ENCODE measurements at regions of chr1 and their contacts with region 1.

Region 1: DNA sequence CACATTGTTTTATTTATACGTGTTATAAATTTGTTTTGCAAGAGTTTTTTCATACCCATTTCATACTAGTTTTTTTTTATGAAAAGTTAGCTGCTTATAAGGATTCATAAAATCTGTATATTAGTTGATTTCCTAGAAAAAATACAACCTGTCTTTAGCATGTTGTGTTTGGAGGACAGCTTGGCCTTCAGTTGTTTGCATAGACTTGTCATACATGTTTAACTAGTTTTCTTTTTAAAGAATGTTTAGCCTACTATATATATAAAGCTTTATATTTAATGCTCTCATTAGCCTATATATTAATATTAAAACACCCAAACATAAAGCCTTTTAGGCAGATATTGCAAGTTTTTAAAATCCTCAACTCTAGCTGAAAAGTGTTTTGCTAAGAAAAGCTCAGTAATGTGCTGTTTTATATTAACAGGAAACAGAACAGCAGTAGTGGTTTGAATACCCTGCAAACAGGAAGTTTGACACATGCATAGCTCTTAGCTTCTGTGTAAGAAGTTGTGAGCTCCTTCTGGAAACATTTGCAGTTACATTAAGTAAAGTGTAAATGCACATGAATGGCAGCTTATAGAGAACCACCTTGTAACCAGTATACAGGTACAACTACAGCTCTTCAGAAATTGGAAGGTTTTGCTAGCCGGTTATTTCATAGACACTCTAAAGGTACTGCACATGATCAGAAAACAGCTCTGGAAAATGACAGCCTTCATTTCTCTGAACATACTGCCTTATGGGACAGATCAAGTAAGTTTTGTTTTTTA is at the start of gene PRKACB:
- DNase-seq: no peak
- ATAC-seq: peak; percentile 35; the same call in 1 of the 2 replicates
- H3K4me3 ChIP-seq: peak within 1 kb of the TSS; percentile 4 to 16; a peak in 2 of 4 replicates
- H3K27ac ChIP-seq: peak within 1 kb of the TSS; percentile 89
- H3K4me1 ChIP-seq: peaks cover 75 to 82% of the 10 kb centered on the region in 2 experiments
- H3K27me3 ChIP-seq: no peaks in the 10 kb centered on the region
- CTCF ChIP-seq: no peak
- POLR2A ChIP-seq: no peak
- RAD21 ChIP-seq: peak; percentile 27; the same call in 1 of the 2 replicates
- total RNA-seq, gene PRKACB: 135 TPM

Region 2: DNA sequence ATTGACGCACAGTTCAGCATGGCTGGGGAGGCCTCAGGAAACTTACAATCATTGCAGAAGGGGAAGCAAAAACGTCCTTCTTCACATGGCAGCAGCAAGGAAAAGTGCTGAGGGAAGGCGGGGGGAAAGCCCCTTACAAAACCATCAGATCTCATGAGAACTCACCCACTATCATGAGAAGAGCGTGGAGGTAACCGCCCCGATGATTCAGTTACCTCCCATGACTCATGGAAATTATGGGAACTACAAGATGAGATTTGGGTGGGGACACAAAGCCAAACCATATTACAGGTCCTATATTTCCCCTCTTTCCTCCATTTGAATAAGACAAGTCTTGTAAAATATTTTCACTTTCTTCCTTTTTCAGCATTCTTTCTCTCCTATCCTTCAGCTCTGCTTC is 137.4 kb before region 1 on chr1:
- CTCF ChIA-PET with region 1: no interaction called
- POLR2A ChIA-PET with region 1: no interaction called
- RAD21 ChIA-PET with region 1: no interaction called
- intact Hi-C with region 1: no loop called
- DNase-seq: no peak
- ATAC-seq: no peak
- H3K4me3 ChIP-seq: no peak overlapping the region
- H3K27ac ChIP-seq: no peak overlapping the region
- H3K4me1 ChIP-seq: no peaks in the 10 kb centered on the region
- H3K27me3 ChIP-seq: no peaks in the 10 kb centered on the region
- CTCF ChIP-seq: no peak
- POLR2A ChIP-seq: no peak
- RAD21 ChIP-seq: no peak

Region 3: DNA sequence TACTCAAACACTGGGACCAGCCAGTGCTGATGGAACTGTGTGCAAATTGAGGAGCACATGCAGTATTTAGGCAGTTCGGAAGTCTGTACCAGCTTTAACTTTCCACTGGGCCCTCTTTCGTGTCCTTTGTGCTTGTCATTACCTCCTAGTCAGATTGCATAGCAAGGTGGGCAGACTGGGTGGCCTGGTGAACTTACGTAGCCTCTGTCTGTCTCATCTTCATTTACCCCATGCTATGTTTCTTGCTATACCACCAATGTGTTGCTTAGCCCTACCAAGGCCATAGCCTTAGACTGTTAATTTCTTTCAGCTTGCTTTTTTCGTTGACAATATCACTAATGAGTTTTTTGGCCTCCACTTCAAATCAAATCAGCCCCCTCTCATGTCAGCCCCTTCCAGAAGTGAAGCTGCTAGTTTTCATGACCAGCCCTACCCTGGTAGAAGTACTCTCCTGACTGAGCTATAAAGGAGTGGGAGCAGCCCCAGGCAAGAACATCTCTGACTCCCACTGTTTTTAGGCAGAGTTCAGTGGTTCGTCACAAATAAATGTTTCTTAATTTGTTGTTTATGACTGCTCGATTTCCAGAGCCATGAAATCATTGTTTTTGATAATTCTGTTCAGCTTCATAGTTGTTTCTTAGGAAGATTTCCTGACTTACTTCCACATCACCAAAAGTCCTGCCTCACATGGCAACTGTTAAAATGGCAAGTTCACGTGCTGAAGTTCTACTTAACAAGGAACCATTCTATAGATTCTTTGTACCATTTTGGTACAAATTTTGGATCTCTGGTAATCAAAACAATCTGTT is 19.3 kb after region 1 on chr1:
- CTCF ChIA-PET with region 1: interaction called, 3 read pairs
- POLR2A ChIA-PET with region 1: interaction called, 19 read pairs
- RAD21 ChIA-PET with region 1: no interaction called
- intact Hi-C with region 1: no loop called
- DNase-seq: no peak
- ATAC-seq: peak; percentile 40
- H3K4me3 ChIP-seq: no peak overlapping the region
- H3K27ac ChIP-seq: peak overlapping the region; percentile 99
- H3K4me1 ChIP-seq: peaks cover 82 to 96% of the 10 kb centered on the region in 2 experiments
- H3K27me3 ChIP-seq: no peaks in the 10 kb centered on the region
- CTCF ChIP-seq: no peak
- POLR2A ChIP-seq: no peak
- RAD21 ChIP-seq: no peak

Region 4: GRCh38 chr1:84433258-84434080 is 289.5 kb after region 1 on chr1:
- CTCF ChIA-PET with region 1: interaction called, 29 read pairs
- POLR2A ChIA-PET with region 1: interaction called, 4 read pairs
- RAD21 ChIA-PET with region 1: interaction called in 1 of 2 experiments, 7 read pairs
- intact Hi-C with region 1: loop called (anchors 1 kb)
- DNase-seq: peak; percentile 87
- ATAC-seq: peak; percentile 76
- H3K4me3 ChIP-seq: peak overlapping the region; percentile 2 to 42; a peak in 3 of 4 replicates
- H3K27ac ChIP-seq: peak overlapping the region; percentile 95
- H3K4me1 ChIP-seq: peaks cover 49 to 66% of the 10 kb centered on the region in 2 experiments
- H3K27me3 ChIP-seq: no peaks in the 10 kb centered on the region
- CTCF ChIP-seq: peak; percentile 65 to 86 (median 81)
- POLR2A ChIP-seq: no peak
- RAD21 ChIP-seq: peak; percentile 96

Region 5: GRCh38 chr1:84541679-84542078 is 397.7 kb after region 1 on chr1:
- CTCF ChIA-PET with region 1: no interaction called
- POLR2A ChIA-PET with region 1: no interaction called
- RAD21 ChIA-PET with region 1: interaction called in 1 of 2 experiments, 3 read pairs
- intact Hi-C with region 1: loop called (anchors 2 kb)
- DNase-seq: peak; percentile 18
- ATAC-seq: no peak
- H3K4me3 ChIP-seq: no peak overlapping the region
- H3K27ac ChIP-seq: no peak overlapping the region
- H3K4me1 ChIP-seq: peaks cover 0 to 2% of the 10 kb centered on the region in 2 experiments; a peak in 1 of 4 replicates
- H3K27me3 ChIP-seq: no peaks in the 10 kb centered on the region
- CTCF ChIP-seq: peak; percentile 30 to 57 (median 57); a peak in 4 of 6 replicates
- POLR2A ChIP-seq: no peak
- RAD21 ChIP-seq: peak; percentile 79

Region 6: GRCh38 chr1:84620720-84621313 is 476.8 kb after region 1 on chr1:
- CTCF ChIA-PET with region 1: interaction called, 6 read pairs
- POLR2A ChIA-PET with region 1: interaction called, 3 read pairs
- RAD21 ChIA-PET with region 1: no interaction called
- intact Hi-C with region 1: loop called (anchors 2 kb)
- DNase-seq: peak; percentile 71
- ATAC-seq: peak; percentile 93
- H3K4me3 ChIP-seq: peak overlapping the region; percentile 47 to 62
- H3K27ac ChIP-seq: peak overlapping the region; percentile 91
- H3K4me1 ChIP-seq: peaks cover 18 to 25% of the 10 kb centered on the region in 2 experiments
- H3K27me3 ChIP-seq: no peaks in the 10 kb centered on the region
- CTCF ChIP-seq: peak; percentile 72 to 99 (median 92)
- POLR2A ChIP-seq: no peak
- RAD21 ChIP-seq: peak; percentile 87

Region 7: DNA sequence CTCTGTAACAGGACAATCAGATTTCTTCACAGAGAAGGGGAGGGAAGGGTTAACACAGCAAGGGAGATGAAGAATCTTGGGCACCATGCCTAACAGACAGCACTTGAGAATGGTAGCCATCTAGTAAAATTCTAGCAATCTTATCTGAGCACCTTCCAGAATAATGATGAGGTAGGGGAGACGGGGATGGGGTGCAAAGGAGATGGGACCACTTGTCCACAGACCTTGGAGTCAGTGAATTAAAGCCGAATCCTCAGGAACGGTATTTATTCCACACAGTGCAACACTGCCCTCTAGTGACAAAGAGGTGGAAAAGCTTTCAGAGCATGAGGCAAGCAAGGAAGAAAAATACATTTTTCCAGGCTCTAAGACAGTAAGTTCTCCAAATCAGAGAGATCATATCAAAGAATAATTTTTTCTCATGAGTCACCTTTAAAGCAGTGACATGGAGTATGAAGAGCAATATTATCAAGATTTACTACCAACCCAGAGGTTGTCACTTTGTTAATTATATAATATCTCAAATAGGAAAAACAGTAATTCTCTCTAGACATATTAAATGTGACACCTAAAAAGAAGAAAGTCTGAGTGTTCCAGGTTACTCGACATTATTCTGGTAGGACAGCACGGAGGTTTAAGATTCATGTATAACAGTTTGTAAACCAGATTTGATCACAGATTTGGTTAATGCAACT is 792.3 kb after region 1 on chr1:
- CTCF ChIA-PET with region 1: interaction called, 6 read pairs
- POLR2A ChIA-PET with region 1: no interaction called
- RAD21 ChIA-PET with region 1: no interaction called
- intact Hi-C with region 1: loop called (anchors 5 kb)
- DNase-seq: peak; percentile 39
- ATAC-seq: peak; percentile 83
- H3K4me3 ChIP-seq: no peak overlapping the region
- H3K27ac ChIP-seq: no peak overlapping the region
- H3K4me1 ChIP-seq: no peaks in the 10 kb centered on the region
- H3K27me3 ChIP-seq: no peaks in the 10 kb centered on the region
- CTCF ChIP-seq: peak; percentile 71 to 95 (median 90); a peak in 5 of 6 replicates
- POLR2A ChIP-seq: no peak
- RAD21 ChIP-seq: peak; percentile 92